Ascending aorta (tissue), 2 donors: ENCODE measurements at regions of chr3 and their contacts with region 1.

Region 1: DNA sequence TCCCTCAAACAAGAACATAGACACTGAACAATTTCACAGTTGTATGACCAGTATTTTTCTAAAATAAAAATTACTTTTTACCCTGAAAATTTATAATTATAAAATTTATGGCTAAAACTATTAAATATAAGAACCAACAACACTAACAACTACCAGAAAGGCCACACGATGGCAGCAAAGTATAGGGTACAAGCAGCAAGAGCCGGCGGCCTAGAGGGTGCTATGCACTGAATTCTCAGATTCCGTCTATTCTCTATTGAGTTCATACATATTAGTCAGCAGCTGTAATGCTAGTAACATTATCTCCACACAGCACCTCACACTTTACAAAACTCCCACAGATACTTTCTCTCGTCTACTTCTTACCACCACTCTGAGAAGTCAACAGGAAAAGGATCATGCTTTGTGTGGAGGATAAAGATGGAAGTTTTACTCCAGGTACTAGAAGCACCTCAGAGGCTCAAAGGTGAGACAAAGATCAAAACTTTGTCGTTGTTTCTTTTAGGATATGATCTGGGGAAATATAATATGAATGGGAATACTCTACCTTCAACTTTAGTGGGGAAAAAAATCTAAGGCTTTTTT is 160.5 kb downstream of the FGF12 start:
- DNase-seq: peak in 1 of 2 donors; percentile 87
- H3K4me3 ChIP-seq: no peak overlapping the region
- H3K27ac ChIP-seq: no peak overlapping the region
- H3K4me1 ChIP-seq: no peaks in the 10 kb centered on the region
- H3K27me3 ChIP-seq: no peaks in the 10 kb centered on the region
- CTCF ChIP-seq: peak; percentile 50 to 77 (median 55)

Region 2: GRCh38 chr3:192642651-192643050 is 75.9 kb after region 1 on chr3:
- intact Hi-C with region 1: no loop called
- DNase-seq: no peak
- H3K4me3 ChIP-seq: no peak overlapping the region
- H3K27ac ChIP-seq: no peak overlapping the region
- H3K4me1 ChIP-seq: no peaks in the 10 kb centered on the region
- H3K27me3 ChIP-seq: no peaks in the 10 kb centered on the region
- CTCF ChIP-seq: no peak

Region 3: DNA sequence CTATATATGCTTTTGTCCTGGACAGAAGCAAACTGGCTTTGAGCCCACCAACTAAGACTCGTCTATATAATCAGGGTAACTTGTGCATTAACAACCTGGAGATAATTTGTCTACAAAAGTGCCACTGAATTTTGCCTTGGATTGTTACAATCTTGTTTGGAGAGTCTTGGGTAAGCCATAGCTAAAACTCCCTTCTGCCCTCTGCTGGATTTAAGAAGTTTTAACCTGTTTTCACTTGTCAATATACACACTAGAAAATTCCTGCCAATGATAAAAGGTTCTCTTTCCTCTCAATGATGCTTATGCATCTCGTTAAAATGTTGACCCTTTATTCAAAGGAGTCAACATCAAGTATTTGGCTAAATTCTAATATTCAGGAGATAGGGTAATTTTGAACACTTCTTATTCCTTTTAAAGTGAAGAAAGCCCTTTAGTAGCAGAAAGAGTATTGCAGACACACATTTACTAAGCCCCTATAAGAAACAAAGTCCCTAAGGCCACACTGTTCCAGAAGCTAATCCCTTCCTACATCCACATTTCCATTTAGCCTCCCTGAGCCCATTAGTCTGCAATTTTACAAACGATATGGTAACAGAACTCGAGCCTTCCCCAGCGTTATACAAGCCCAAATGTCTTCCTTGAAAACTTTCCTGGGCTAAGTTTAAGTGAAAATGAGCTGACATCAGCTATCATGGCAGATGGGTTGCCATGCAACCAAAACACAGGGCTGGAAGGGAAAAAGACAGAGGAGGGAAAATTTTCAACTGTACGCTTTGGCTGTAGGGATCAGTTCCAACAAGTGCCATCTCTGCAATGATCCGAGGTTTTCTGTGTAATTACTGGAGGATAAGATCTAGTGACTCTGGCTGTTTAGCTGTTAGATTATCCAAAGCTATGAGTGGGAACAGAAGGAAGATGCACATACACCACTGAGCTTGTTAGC is 236.4 kb after region 1 on chr3:
- intact Hi-C with region 1: loop called (anchors 1 kb)
- DNase-seq: no peak
- H3K4me3 ChIP-seq: no peak overlapping the region
- H3K27ac ChIP-seq: no peak overlapping the region
- H3K4me1 ChIP-seq: no peaks in the 10 kb centered on the region
- H3K27me3 ChIP-seq: no peaks in the 10 kb centered on the region
- CTCF ChIP-seq: peak; percentile 5 to 47 (median 33)

Region 4: DNA sequence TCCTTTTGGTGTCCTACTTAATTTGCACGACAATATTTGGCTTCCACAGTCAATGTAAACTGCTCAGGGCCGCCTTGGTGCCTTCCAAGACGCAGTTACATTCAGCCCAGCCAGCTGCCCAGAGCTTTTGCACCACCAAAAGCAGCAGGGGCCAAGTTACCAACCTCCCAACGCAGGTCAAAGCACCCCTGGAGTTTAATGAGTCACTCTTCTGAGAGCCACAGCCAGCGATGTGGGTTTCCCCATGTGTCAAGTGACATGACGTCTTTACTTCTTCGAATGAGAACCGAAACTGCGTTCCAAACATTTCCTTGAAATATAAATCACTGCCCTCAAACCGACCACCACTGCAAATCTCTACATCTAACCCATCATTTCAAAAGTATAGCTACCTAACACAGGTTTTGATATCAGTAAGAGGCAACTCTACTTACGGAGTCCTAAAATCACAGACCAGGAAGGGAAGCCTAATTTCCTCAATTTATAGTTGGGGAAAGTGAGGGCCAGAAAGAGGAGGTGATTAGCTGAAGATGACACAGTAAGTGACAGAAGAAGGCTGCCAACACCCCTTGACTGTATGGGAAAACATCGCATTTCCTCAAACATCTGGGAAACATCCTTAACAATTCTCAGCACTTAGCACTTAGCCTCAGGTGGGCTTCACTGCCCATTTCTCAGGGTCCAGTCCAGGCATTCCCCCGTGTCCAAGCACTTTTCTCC is 326.3 kb after region 1 on chr3:
- intact Hi-C with region 1: no loop called
- DNase-seq: peak; percentile 57 to 81
- H3K4me3 ChIP-seq: peak overlapping the region in 1 of 2 donors; percentile 21
- H3K27ac ChIP-seq: peak overlapping the region in 1 of 2 donors; percentile 42
- H3K4me1 ChIP-seq: peaks cover 6 to 18% of the 10 kb centered on the region in 2 donors
- H3K27me3 ChIP-seq: no peaks in the 10 kb centered on the region
- CTCF ChIP-seq: no peak

Region 5: DNA sequence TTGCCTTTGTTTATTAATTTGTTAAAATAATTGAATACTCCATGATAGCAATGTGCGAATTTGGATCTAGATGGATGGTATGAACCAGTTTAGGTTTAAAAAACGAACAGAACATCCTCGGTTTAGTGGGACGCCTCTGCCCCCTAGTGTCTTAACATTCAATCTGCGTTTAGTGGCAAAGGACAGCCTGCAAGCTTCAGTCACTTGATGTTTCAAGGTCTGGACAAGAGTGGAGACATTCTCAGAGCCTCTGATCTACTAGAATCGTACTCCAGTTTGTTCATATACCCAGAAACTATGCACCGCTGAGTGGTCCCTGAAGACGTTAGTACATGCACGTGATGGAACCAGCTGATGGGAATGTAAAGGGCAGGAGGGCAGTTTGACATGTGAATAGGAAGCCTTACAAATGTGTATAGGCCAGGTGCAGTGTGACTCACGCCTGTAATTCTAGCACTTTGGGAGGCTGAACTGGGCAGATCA is 1005.7 kb after region 1 on chr3:
- intact Hi-C with region 1: loop called (anchors 5 kb)
- DNase-seq: no peak
- H3K4me3 ChIP-seq: no peak overlapping the region
- H3K27ac ChIP-seq: no peak overlapping the region
- H3K4me1 ChIP-seq: no peaks in the 10 kb centered on the region
- H3K27me3 ChIP-seq: no peaks in the 10 kb centered on the region
- CTCF ChIP-seq: peak; percentile 25 to 64 (median 61)